Head of caudate nucleus (tissue), 42 donors: ENCODE measurements at regions of chr5 and their contacts with region 1.

Region 1: GRCh38 chr5:147822686-147823491 is 8.6 kb downstream of the SPINK1 start:
- DNase-seq: peak in 41 of 42 donors; percentile 7 to 85 (median 67)

Region 2: DNA sequence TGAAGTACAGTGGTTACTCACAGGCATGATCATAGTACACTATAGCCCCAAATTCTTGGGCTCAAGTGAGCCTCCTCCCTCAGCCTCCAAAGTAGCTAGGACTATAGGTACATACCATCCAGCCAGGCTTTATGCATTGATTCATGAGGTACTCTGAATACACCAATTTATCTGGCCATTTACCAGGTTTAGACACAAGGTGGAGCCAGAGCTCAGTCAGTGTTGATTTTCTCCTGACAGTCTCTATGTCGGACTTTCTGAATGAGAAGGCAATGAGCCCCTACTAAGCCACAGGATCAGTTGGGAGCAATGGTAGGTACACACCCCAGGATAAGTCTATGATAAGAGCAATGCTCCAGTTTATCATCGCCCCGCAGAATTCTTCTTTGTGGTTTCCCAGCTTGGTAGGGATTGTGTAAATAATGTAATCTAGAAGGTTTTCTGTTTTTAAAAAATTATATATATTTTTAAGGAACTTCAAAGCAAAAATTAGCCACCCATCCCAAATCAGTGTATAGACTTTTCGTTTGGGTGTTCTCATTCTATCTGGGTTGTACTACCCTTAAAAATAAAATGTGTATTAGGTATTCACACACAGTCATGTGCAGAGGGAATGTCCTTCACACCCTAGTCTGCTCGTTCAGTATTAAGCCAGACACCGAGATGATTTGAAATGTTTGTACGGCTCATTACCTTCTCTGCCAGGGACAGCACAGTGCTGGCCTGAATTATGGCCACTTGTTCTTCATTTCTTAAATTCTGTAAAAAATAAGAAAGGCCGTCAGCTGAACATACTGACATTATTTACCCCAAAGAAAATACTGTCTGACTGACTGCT is 194.6 kb before region 1 on chr5:
- intact Hi-C with region 1: loop called (anchors 2 kb)
- DNase-seq: peak in 40 of 42 donors; percentile 8 to 93 (median 76)